GM12878 (cell line): ENCODE measurements at regions of chr4 and their contacts with region 1.

Region 1: DNA sequence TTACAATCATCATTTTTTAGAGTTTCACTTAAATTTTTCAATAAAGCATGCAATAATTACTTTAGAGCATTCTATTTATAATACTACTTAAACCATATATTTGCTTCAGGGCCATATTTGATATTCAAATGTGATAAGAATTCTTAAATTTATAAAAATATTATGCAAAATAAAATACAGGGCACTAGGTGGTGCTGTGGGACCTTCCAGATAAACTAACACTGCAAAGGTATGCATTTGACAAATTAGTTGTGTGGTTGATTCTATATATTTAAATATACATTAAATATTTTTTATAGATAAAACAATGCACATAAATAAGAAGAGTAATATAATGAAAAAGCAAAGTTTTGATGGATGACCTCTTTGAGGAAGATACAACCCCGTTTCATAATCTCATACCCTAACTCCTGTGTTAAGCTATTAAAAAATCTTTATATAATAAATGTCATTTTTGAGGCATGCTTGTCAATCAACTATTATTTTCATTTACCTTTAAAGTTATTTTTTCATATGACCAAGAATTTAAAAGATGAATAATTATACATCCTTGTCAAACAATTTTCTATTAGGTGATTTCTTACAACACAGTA is 128.4 kb downstream of the REELD1 start:
- DNase-seq: no peak
- ATAC-seq: peak; percentile 44
- H3K4me3 ChIP-seq: no peak overlapping the region
- H3K27ac ChIP-seq: no peak overlapping the region
- H3K4me1 ChIP-seq: peaks cover 13% of the 10 kb centered on the region
- H3K27me3 ChIP-seq: no peaks in the 10 kb centered on the region
- CTCF ChIP-seq: peak; percentile 34 to 55 (median 40); a peak in 4 of 6 replicates
- EP300 ChIP-seq: no peak
- POLR2A ChIP-seq: no peak
- RAD21 ChIP-seq: peak; percentile 85

Region 2: DNA sequence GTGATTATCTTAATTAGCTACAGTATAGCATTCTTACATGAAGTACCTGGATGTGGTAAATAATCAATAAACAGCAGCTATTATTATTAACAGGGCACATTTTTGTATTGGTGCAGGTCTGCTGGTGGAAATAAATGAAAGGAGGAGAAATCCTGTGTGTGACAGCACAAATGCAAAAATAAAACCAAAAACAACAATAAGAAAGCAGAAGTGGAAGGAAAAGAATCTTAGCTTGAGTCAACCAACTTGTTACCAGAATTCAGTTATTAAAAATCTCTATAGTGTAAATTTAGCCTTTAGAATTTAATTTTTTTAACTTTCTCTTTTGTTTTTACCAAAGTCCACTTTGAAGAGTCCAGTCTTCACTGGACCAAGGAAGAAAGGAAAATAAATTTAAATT is 230.3 kb before region 1 on chr4:
- CTCF ChIA-PET with region 1: no interaction called
- POLR2A ChIA-PET with region 1: no interaction called
- RAD21 ChIA-PET with region 1: no interaction called
- SMC1A ChIA-PET with region 1: no interaction called
- in situ Hi-C with region 1: no loop called
- intact Hi-C with region 1: no loop called
- DNase-seq: no peak
- ATAC-seq: peak; percentile 70
- H3K4me3 ChIP-seq: no peak overlapping the region
- H3K27ac ChIP-seq: peak overlapping the region; percentile 81
- H3K4me1 ChIP-seq: peaks cover 27% of the 10 kb centered on the region
- H3K27me3 ChIP-seq: no peaks in the 10 kb centered on the region
- CTCF ChIP-seq: no peak
- EP300 ChIP-seq: no peak
- POLR2A ChIP-seq: no peak
- RAD21 ChIP-seq: no peak

Region 3: DNA sequence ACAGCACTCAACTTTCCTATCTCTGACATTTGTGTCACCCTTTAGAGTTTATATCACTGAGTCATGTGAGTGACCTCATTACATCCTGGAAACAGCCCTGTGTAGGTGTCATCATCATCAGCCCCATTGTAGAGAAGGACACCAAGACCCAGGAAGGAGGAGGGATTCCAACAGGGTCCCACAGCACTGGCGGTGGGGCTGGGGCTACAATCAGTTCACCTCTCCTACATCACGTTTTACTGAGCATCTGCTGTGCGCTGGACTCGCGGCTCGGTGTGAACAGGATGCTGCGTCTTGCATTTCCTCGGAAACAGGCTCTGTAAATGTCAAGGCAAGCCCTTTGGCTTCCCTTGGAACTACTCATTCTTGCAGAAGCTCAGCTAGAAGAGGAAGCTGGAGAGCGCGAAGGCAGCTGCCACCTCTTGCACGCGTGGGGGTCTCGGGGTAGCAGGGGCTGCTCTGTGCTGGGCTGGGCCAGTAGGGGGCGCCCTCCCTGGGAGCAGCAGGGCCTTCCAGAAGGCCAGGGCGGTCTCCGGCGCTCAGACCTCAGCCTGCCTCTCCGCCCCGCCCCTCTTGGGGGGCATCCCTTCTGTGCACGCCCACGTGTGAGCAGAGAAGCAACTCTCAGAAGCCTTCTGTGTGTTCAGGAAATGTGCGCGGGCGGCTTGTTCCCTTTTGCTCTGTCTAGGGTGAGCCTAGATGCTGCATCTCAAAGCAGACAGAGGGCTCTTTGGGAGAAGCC is 99.4 kb before region 1 on chr4:
- CTCF ChIA-PET with region 1: interaction called, 15 read pairs
- POLR2A ChIA-PET with region 1: interaction called, 9 read pairs
- RAD21 ChIA-PET with region 1: interaction called, 4 read pairs
- SMC1A ChIA-PET with region 1: interaction called, 13 read pairs
- in situ Hi-C with region 1: loop called (anchors 5 kb)
- intact Hi-C with region 1: loop called (anchors 1 kb)
- DNase-seq: peak; percentile 45
- ATAC-seq: peak; percentile 85
- H3K4me3 ChIP-seq: no peak overlapping the region
- H3K27ac ChIP-seq: no peak overlapping the region
- H3K4me1 ChIP-seq: peaks cover 24% of the 10 kb centered on the region
- H3K27me3 ChIP-seq: no peaks in the 10 kb centered on the region
- CTCF ChIP-seq: peak; percentile 58 to 77 (median 73)
- EP300 ChIP-seq: no peak; a peak in 1 of 4 replicates
- POLR2A ChIP-seq: no peak
- RAD21 ChIP-seq: peak; percentile 27; the same call in 1 of the 2 replicates

Region 4: DNA sequence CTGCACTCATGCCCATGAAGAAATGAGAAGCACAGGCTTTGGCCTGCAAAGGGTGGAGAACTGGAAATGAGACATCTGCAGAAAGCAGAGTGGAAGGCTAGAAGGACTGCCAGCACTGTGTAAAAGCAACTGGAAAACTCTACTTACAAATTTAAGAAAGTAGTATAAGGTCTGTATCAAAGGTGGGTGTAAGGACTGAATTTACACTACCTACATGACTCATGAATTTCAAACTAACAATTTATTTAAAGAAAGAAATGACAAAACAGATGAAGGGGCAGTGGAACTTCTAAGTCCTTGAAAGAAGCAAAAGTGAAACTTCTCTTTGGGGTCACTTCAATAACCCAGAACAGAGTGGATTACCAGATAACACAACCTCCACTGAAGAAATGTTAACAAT is 107.8 kb after region 1 on chr4:
- CTCF ChIA-PET with region 1: interaction called, 5 read pairs
- POLR2A ChIA-PET with region 1: no interaction called
- RAD21 ChIA-PET with region 1: no interaction called
- SMC1A ChIA-PET with region 1: no interaction called
- in situ Hi-C with region 1: no loop called
- intact Hi-C with region 1: loop called (anchors 5 kb)
- DNase-seq: no peak
- ATAC-seq: peak; percentile 92
- H3K4me3 ChIP-seq: peak overlapping the region; percentile 57
- H3K27ac ChIP-seq: peak overlapping the region; percentile 28
- H3K4me1 ChIP-seq: peaks cover 14% of the 10 kb centered on the region; the same call in 1 of the 2 replicates
- H3K27me3 ChIP-seq: no peaks in the 10 kb centered on the region
- CTCF ChIP-seq: no peak
- EP300 ChIP-seq: no peak
- POLR2A ChIP-seq: no peak
- RAD21 ChIP-seq: no peak

Region 5: GRCh38 chr4:146633471-146633800 is 290.7 kb after region 1 on chr4:
- CTCF ChIA-PET with region 1: no interaction called
- POLR2A ChIA-PET with region 1: no interaction called
- RAD21 ChIA-PET with region 1: no interaction called
- SMC1A ChIA-PET with region 1: no interaction called
- in situ Hi-C with region 1: no loop called
- intact Hi-C with region 1: loop called (anchors 5 kb)
- DNase-seq: no peak
- ATAC-seq: no peak
- H3K4me3 ChIP-seq: no peak overlapping the region
- H3K27ac ChIP-seq: no peak overlapping the region
- H3K4me1 ChIP-seq: no peaks in the 10 kb centered on the region
- H3K27me3 ChIP-seq: peaks cover 3 to 10% of the 10 kb centered on the region in 2 experiments; a peak in 3 of 4 replicates
- CTCF ChIP-seq: no peak
- EP300 ChIP-seq: no peak
- POLR2A ChIP-seq: no peak
- RAD21 ChIP-seq: no peak

Region 6: GRCh38 chr4:146787731-146788130 is 445.0 kb after region 1 on chr4:
- CTCF ChIA-PET with region 1: no interaction called
- POLR2A ChIA-PET with region 1: no interaction called
- RAD21 ChIA-PET with region 1: no interaction called
- SMC1A ChIA-PET with region 1: no interaction called
- in situ Hi-C with region 1: no loop called
- intact Hi-C with region 1: loop called (anchors 10 kb)
- DNase-seq: no peak
- ATAC-seq: no peak
- H3K4me3 ChIP-seq: no peak overlapping the region
- H3K27ac ChIP-seq: no peak overlapping the region
- H3K4me1 ChIP-seq: no peaks in the 10 kb centered on the region
- H3K27me3 ChIP-seq: no peaks in the 10 kb centered on the region
- CTCF ChIP-seq: no peak
- EP300 ChIP-seq: no peak
- POLR2A ChIP-seq: no peak
- RAD21 ChIP-seq: no peak

Region 7: GRCh38 chr4:147096667-147097604 is 754.2 kb after region 1 on chr4:
- CTCF ChIA-PET with region 1: interaction called, 16 read pairs
- POLR2A ChIA-PET with region 1: no interaction called
- RAD21 ChIA-PET with region 1: interaction called, 17 read pairs
- SMC1A ChIA-PET with region 1: interaction called, 18 read pairs
- in situ Hi-C with region 1: loop called (anchors 10 kb)
- intact Hi-C with region 1: loop called (anchors 2 kb)
- DNase-seq: no peak
- ATAC-seq: peak; percentile 64
- H3K4me3 ChIP-seq: no peak overlapping the region
- H3K27ac ChIP-seq: no peak overlapping the region
- H3K4me1 ChIP-seq: no peaks in the 10 kb centered on the region
- H3K27me3 ChIP-seq: peaks cover 0 to 1% of the 10 kb centered on the region in 2 experiments; a peak in 2 of 4 replicates
- CTCF ChIP-seq: peak; percentile 32 to 66 (median 43); a peak in 5 of 6 replicates
- EP300 ChIP-seq: no peak
- POLR2A ChIP-seq: no peak
- RAD21 ChIP-seq: peak; percentile 86